ENCODE measurements at regions of chr9 and their contacts with region 1.

Region 1: GRCh38 chr9:70413798-70414775 is at the start of gene KLF9:
- DNase-seq: peak; percentile 80
- ATAC-seq: peak; percentile 72
- H3K4me3 ChIP-seq: peak within 1 kb of the TSS; percentile 81
- H3K27ac ChIP-seq: peak within 1 kb of the TSS; percentile 62
- H3K4me1 ChIP-seq: peaks cover 21% of the 10 kb centered on the region
- H3K27me3 ChIP-seq: no peaks in the 10 kb centered on the region
- CTCF ChIP-seq: no peak
- EP300 ChIP-seq: no peak
- POLR2A ChIP-seq: peak; percentile 57; the same call in 1 of the 2 replicates
- RAD21 ChIP-seq: no peak
- polyA plus RNA-seq, gene KLF9: 0.35 to 0.53 TPM

Region 2: DNA sequence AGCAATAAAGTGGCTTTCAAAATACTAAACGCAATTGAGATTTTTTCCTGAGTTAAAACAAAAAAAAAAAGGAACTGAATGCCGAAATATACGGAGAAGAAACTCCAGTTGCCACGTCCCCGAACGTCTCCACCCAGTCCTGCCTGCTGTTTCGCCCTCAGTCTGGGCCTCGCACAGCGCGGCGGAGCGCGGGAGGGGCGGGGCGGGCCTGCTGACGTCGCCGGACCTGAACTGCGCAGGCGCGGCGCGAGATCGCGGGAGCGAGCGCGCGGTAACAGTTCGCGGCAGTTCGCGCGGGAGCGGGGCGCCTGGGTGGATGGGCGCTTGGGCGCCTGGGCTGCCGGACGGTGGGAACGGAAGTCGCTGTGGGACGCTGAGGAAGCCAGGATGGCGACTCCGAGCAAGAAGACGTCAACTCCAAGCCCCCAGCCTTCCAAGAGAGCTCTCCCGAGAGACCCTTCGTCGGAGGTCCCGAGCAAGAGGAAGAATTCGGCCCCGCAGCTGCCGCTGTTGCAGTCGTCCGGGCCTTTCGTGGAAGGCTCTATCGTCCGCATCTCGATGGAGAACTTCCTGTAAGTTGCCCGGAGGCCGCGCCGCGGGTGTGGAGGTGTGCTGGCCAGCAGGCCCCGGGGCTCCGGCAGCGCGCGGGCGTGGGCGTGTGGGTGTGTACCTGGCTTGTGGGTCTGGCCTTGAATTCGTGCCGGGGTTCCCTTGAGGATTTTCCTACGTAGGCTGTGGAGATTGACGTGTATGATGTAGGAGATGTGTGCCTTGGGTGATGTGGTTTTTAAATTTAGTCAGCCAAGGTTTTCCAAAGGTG is 155.2 kb before region 1 on chr9 and contains the start of gene SMC5:
- CTCF ChIA-PET with region 1: no interaction called
- POLR2A ChIA-PET with region 1: interaction called, 4 read pairs
- RAD21 ChIA-PET with region 1: interaction called, 3 read pairs
- SMC1A ChIA-PET with region 1: interaction called, 3 read pairs
- in situ Hi-C with region 1: loop called (anchors 5 kb)
- intact Hi-C with region 1: loop called (anchors 5 kb)
- DNase-seq: peak; percentile 80
- ATAC-seq: peak; percentile 84
- H3K4me3 ChIP-seq: peak within 1 kb of the TSS; percentile 85
- H3K27ac ChIP-seq: peak within 1 kb of the TSS; percentile 93
- H3K4me1 ChIP-seq: peaks cover 14% of the 10 kb centered on the region
- H3K27me3 ChIP-seq: no peaks in the 10 kb centered on the region
- CTCF ChIP-seq: no peak
- EP300 ChIP-seq: peak; percentile 43 to 76; a peak in 2 of 4 replicates
- POLR2A ChIP-seq: peak; percentile 99
- RAD21 ChIP-seq: no peak
- polyA plus RNA-seq, gene SMC5: 6.5 to 7.2 TPM

Region 3: DNA sequence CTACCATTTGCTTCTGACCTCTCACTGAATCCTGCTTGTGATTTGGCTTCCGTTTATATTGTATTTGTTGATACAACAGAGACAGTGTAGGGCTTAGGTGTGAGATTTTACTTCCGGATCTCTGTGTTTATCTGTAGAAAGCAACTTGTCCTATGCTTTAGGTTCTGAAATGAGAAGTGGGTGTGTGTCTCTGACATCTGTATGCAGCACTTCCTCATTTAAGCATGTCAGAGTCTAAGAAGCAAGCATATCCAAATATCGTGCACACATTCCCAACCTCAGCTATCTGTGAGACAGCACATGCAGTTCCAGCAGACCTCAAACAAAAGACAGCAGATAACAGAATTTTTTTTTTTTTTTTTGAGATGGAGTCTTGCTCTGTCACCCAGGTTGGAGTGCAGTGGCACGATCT is 15.9 kb before region 1 on chr9:
- CTCF ChIA-PET with region 1: interaction called, 5 read pairs
- POLR2A ChIA-PET with region 1: interaction called, 8 read pairs
- RAD21 ChIA-PET with region 1: interaction called, 4 read pairs
- SMC1A ChIA-PET with region 1: interaction called, 20 read pairs
- in situ Hi-C with region 1: no loop called
- intact Hi-C with region 1: no loop called
- DNase-seq: peak; percentile 55
- ATAC-seq: peak; percentile 98
- H3K4me3 ChIP-seq: no peak overlapping the region
- H3K27ac ChIP-seq: no peak overlapping the region; the same call in 1 of the 2 replicates
- H3K4me1 ChIP-seq: peaks cover 13% of the 10 kb centered on the region
- H3K27me3 ChIP-seq: no peaks in the 10 kb centered on the region
- CTCF ChIP-seq: no peak
- EP300 ChIP-seq: peak in 1 of 2 experiments; percentile 27; a peak in 1 of 4 replicates
- POLR2A ChIP-seq: no peak
- RAD21 ChIP-seq: no peak

Region 4: DNA sequence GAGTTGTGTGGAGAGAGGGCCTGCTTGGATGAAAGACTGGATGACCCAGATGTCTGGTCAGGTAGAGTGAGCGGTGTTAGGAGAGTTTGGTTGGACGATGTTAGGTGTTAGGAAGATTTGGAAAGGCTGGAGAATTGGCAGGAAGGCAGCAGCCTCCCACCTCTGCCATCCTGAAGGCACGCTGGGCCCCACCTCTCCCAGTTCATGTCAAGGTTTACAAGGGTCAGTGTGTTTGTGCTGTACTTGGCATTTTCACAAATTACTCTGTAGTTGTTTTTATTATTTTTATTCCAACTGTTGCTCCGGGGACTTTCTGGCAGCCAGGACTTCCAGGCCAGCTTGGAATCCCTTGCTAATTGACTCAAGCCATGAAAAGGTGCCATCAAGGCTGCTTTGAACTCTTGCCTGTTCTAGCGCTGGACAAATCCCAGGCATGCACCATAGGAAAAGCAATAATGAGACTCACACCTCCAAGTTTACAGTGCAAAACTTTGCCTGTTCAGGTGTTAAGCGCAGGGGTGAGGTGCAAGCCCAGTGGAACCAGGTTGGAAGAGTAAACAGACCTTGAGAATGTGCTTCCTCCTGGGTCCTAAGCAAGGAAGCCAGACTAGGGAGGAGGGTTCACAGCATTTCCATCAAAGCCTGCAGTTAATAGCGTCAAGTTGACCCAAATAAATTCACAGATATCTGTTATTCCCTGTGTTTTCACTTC is 42.1 kb after region 1 on chr9:
- CTCF ChIA-PET with region 1: no interaction called
- POLR2A ChIA-PET with region 1: no interaction called
- RAD21 ChIA-PET with region 1: no interaction called
- SMC1A ChIA-PET with region 1: no interaction called
- in situ Hi-C with region 1: no loop called
- intact Hi-C with region 1: no loop called
- DNase-seq: no peak
- ATAC-seq: no peak
- H3K4me3 ChIP-seq: no peak overlapping the region
- H3K27ac ChIP-seq: no peak overlapping the region
- H3K4me1 ChIP-seq: no peaks in the 10 kb centered on the region
- H3K27me3 ChIP-seq: no peaks in the 10 kb centered on the region
- CTCF ChIP-seq: no peak
- EP300 ChIP-seq: no peak
- POLR2A ChIP-seq: no peak
- RAD21 ChIP-seq: no peak

Region 5: GRCh38 chr9:70563431-70564204 is 149.5 kb after region 1 on chr9:
- CTCF ChIA-PET with region 1: interaction called, 4 read pairs
- POLR2A ChIA-PET with region 1: no interaction called
- RAD21 ChIA-PET with region 1: no interaction called
- SMC1A ChIA-PET with region 1: interaction called, 5 read pairs
- in situ Hi-C with region 1: no loop called
- intact Hi-C with region 1: loop called (anchors 5 kb)
- DNase-seq: peak; percentile 83
- ATAC-seq: peak; percentile 94
- H3K4me3 ChIP-seq: no peak overlapping the region
- H3K27ac ChIP-seq: peak overlapping the region; percentile 67
- H3K4me1 ChIP-seq: peaks cover 15% of the 10 kb centered on the region
- H3K27me3 ChIP-seq: no peaks in the 10 kb centered on the region
- CTCF ChIP-seq: no peak
- EP300 ChIP-seq: peak; percentile 96 to 97
- POLR2A ChIP-seq: no peak
- RAD21 ChIP-seq: no peak